WTC11 (cell line): ENCODE measurements at regions of chr1 and their contacts with region 1.

Region 1: DNA sequence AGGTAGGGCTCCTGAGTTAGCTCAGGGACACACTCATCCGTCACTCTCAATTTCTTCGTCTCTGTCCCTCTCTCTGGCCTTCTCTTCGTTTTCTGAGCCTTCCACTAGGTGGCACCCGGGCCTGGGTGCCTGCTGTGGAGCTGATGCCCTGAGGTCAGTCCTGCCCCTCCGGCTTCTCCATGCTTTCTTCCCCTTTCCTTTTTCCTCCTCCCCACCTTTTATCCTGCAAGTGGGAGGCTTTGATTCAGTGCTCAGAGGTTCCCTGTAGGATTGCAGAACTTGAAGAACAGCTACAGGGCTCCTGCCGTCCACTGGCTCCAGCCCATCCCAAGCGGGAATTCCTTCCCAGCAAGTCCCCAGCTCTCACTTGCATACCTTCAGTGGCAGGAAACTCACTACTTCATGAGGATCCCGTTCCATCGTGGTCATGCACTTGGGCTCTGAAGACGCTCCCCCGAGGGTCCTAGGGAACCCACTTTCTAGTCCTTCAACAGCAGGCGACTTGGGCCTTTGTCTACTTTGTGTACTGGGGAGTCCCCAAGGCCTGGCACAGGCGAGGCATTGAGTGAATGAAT is 45.6 kb downstream of the SRRM1 start:
- DNase-seq: peak; percentile 79
- ATAC-seq: peak; percentile 92
- H3K4me3 Mint-ChIP-seq: no peak overlapping the region
- H3K27ac Mint-ChIP-seq: peak overlapping the region; percentile 0; the same call in 1 of the 2 replicates
- H3K4me1 Mint-ChIP-seq: peaks cover 10% of the 10 kb centered on the region
- H3K27me3 Mint-ChIP-seq: no peaks in the 10 kb centered on the region; the same call in 1 of the 2 replicates
- CTCF ChIP-seq: peak; percentile 64

Region 2: GRCh38 chr1:24393892-24394291 is 294.8 kb before region 1 on chr1:
- CTCF ChIA-PET with region 1: no interaction called
- POLR2A ChIA-PET with region 1: no interaction called
- DNase-seq: no peak
- ATAC-seq: no peak
- H3K4me3 Mint-ChIP-seq: no peak overlapping the region
- H3K27ac Mint-ChIP-seq: peak overlapping the region; percentile 78
- H3K4me1 Mint-ChIP-seq: peaks cover 34% of the 10 kb centered on the region
- H3K27me3 Mint-ChIP-seq: no peaks in the 10 kb centered on the region
- CTCF ChIP-seq: no peak

Region 3: DNA sequence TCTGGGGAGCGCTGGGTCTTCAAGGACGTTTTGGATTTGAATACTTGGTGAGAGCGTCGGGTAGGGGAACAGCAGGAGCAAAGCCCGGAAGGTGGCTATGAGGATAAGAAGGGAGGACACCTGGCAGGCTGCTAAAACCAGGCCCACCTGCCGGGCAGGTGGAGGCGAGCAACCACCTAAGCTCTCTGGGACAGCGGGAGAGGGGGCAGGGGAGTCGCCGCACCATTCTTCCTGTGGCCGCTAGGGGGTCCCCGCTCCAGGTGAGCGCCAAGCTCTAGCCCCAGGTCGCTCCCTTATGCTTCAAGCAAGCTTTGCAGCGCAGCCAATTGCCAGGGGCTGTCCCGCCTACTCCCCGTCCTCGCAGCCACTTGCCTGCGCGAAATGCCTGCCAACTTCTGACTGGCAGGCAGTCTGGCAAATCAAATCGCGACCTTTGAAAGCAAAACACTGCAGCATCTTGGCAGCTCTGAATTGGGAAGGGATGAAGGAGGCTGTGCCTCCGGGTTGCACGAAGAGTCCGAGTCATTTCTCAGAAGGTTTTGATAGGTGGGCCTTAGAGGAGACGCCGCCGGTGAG is 273.3 kb before region 1 on chr1 and contains the start of gene NIPAL3:
- CTCF ChIA-PET with region 1: no interaction called
- POLR2A ChIA-PET with region 1: no interaction called
- DNase-seq: peak; percentile 99
- ATAC-seq: peak; percentile 94
- H3K4me3 Mint-ChIP-seq: peak within 1 kb of the TSS; percentile 93
- H3K27ac Mint-ChIP-seq: peak within 1 kb of the TSS; percentile 89
- H3K4me1 Mint-ChIP-seq: peaks cover 36% of the 10 kb centered on the region
- H3K27me3 Mint-ChIP-seq: no peaks in the 10 kb centered on the region
- CTCF ChIP-seq: peak; percentile 86
- total RNA-seq, gene NIPAL3: 11.2 to 11.3 TPM (median 11.2 TPM) in 3 replicates

Region 4: DNA sequence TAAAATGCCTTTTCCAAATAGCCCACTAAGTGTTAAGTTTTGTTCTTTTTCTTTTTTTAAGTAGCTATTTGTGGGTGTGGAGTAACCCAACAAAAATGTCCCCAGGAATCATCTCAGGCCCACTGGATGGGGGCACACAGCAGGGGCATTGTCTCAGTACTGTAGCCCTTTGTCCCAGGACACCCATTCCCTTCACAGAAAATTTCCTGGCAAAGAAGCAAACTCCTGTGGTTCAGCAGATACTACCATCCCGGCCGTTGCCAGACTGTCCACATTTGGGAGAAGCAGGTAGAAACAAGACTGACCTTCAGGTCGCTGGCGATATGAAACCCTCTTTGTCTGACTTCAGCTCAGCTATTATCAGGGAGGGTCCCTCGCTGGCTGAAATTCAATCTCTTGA is 69.3 kb before region 1 on chr1:
- CTCF ChIA-PET with region 1: no interaction called
- POLR2A ChIA-PET with region 1: no interaction called
- DNase-seq: no peak
- ATAC-seq: no peak
- H3K4me3 Mint-ChIP-seq: no peak overlapping the region
- H3K27ac Mint-ChIP-seq: no peak overlapping the region
- H3K4me1 Mint-ChIP-seq: no peaks in the 10 kb centered on the region
- H3K27me3 Mint-ChIP-seq: no peaks in the 10 kb centered on the region
- CTCF ChIP-seq: no peak

Region 5: DNA sequence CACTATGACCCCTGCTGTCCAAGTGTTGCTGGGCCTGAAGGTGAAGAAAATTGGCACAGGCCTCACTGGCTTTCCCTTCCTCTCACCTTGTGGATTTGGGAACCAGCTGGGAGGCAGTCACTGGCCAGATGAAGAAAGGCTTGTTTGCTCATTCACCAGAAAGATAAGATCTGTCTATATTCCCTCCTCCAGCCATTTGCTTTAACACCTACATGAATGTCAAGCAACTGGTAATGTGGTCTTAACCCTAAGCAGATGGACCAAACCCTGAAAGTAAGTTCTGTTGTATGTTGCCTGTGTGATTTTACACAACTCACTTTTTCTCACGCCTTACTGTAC is 55.9 kb before region 1 on chr1:
- CTCF ChIA-PET with region 1: no interaction called
- POLR2A ChIA-PET with region 1: no interaction called
- DNase-seq: no peak
- ATAC-seq: no peak
- H3K4me3 Mint-ChIP-seq: no peak overlapping the region
- H3K27ac Mint-ChIP-seq: no peak overlapping the region
- H3K4me1 Mint-ChIP-seq: peaks cover 7% of the 10 kb centered on the region; the same call in 1 of the 2 replicates
- H3K27me3 Mint-ChIP-seq: peaks cover 4% of the 10 kb centered on the region
- CTCF ChIP-seq: no peak

Region 6: DNA sequence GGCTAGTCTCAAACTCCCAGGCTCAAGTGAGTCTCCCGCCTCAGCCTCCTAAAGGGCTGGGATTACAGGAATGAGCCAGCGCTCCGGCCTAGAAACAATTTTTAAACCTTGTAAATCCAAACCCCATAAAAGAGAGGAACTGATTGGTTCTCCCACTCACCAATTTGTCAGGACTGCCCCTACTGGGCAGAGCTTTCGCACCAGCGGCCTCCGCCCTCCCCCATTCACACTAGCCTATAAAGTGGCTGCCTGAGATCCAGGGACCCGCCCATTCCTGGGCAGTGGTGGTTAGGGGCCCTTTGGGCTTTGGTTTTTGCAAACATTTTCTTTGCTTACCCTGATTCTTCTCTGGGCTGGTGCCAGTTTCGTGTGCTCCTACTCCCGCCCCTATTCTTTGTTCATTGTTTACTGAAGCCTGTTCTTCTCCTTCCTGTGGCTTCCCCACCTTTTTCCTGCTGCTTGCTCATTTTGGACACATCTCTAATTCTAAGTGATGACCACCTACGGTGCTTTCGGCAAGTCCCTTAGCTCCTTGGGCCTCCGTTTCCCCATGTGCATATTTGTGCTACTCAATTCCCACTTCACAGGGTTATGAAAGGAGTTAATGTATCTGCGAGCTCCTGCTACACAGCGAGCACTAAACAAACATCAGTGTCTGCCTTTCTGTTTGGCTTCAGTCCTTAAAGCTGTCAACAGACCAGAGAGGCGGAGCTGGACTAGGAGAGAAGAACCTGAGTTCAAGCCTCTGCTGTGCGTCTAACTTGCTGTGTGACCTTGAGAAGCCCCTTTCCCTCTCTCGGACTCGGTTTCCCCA is 16.8 kb after region 1 on chr1:
- CTCF ChIA-PET with region 1: interaction called, 33 read pairs
- POLR2A ChIA-PET with region 1: interaction called, 5 read pairs
- DNase-seq: peak; percentile 85
- ATAC-seq: peak; percentile 99
- H3K4me3 Mint-ChIP-seq: no peak overlapping the region
- H3K27ac Mint-ChIP-seq: peak overlapping the region; percentile 62
- H3K4me1 Mint-ChIP-seq: peaks cover 27% of the 10 kb centered on the region
- H3K27me3 Mint-ChIP-seq: peaks cover 2% of the 10 kb centered on the region; the same call in 1 of the 2 replicates
- CTCF ChIP-seq: no peak

Region 7: DNA sequence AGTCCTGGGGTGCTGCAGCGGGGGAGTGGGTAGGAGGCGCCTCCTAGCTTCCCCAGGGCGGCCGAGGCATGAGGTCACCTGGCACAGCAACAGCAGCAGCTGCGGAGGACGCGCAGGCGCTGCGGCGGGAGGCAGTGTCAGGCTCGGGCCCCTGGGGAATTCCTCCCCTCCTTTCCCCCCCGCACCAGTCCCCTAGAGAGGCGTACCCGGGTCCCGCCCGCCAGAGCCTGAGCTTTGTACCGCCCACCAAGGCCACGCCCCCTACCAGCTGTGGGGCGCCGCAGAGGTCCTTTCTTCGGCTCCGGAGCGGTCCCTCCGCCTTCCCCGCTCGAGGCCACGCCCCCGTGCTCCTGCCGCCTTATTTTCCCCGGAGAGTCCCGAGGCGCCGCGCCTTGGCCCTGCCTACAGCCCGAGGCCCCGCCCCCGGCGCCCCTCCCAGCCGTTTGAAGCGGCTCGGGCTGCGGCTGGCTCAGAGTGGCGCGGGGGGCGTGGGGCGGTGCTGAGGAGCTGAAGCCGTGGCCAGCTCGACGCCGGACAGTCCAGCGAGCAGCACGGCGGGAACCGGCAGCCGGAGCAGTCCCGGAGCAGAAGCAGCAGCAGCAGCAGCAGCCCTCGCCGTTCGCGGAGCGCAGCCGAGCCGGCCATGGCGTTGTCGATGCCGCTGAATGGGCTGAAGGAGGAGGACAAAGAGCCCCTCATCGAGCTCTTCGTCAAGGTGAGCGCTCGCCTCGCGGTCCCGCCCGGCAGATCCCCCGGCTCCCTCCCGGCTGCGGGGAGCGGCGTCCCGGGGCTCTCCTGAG is 56.4 kb after region 1 on chr1 and contains the start of gene CLIC4:
- CTCF ChIA-PET with region 1: interaction called, 43 read pairs
- POLR2A ChIA-PET with region 1: interaction called, 6 read pairs
- DNase-seq: peak; percentile 100
- ATAC-seq: peak; percentile 84
- H3K4me3 Mint-ChIP-seq: peak within 1 kb of the TSS; percentile 95
- H3K27ac Mint-ChIP-seq: peak within 1 kb of the TSS; percentile 99
- H3K4me1 Mint-ChIP-seq: peaks cover 63% of the 10 kb centered on the region
- H3K27me3 Mint-ChIP-seq: no peaks in the 10 kb centered on the region
- CTCF ChIP-seq: no peak
- total RNA-seq, gene CLIC4: 248 to 262 TPM (median 260 TPM) in 3 replicates

Region 8: GRCh38 chr1:24830680-24831272 is 142.1 kb after region 1 on chr1:
- CTCF ChIA-PET with region 1: interaction called, 243 read pairs
- POLR2A ChIA-PET with region 1: interaction called, 4 read pairs
- DNase-seq: no peak
- ATAC-seq: peak; percentile 57; the same call in 1 of the 2 replicates
- H3K4me3 Mint-ChIP-seq: no peak overlapping the region
- H3K27ac Mint-ChIP-seq: no peak overlapping the region
- H3K4me1 Mint-ChIP-seq: peaks cover 35% of the 10 kb centered on the region
- H3K27me3 Mint-ChIP-seq: no peaks in the 10 kb centered on the region
- CTCF ChIP-seq: peak; percentile 52; the same call in 1 of the 2 replicates

Region 9: DNA sequence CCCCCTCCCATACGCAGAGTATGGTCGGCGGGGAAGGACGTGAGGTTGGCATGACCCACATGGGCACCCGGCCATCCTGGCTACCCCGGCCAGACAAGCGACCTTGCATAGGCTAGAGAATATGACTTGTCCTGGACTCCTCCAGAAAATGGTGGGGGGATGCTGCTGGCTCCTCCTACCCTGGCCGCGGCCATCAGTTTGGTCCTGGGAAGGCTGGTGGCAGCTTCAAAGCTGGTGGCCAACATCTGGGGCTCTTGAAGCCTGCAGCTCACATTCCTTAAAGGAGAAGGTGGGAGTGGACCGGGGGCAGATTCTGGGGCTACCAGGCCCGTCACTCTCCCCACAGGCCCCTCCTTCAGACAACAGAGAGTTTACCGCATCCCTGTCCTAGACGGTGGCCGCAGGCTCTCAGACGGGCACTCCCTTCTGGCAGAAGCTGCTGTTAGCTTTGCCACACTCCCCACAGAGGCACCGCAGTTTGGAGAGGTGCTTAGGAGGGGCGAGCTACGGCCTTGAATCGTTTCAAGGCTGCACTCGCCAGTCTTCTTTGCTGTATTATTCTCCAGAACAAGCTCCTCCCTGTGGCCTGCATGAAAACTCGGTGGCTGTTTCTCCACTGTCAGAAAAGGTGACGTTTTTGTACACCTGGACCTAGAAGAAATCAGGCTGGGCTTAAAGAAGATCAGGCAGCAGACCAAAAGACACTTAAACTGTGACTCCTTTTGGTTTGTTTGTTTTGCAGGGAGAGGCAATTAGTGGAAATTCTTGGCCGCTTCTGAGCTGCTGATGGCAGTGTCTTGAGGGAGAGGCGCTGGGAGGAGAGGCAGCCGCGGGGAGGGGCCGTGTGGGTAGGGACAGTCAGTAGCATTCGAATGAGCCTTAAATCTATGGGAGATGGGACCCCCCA is 173.4 kb after region 1 on chr1:
- CTCF ChIA-PET with region 1: interaction called, 18 read pairs
- POLR2A ChIA-PET with region 1: no interaction called
- DNase-seq: no peak
- ATAC-seq: peak; percentile 29
- H3K4me3 Mint-ChIP-seq: no peak overlapping the region
- H3K27ac Mint-ChIP-seq: peak overlapping the region; percentile 20; the same call in 1 of the 2 replicates
- H3K4me1 Mint-ChIP-seq: peaks cover 15% of the 10 kb centered on the region
- H3K27me3 Mint-ChIP-seq: no peaks in the 10 kb centered on the region
- CTCF ChIP-seq: no peak